ENCODE measurements at regions of chr2 and their contacts with region 1.

Region 1: GRCh38 chr2:28594289-28595108 is 98.6 kb downstream of the PLB1 start:
- DNase-seq: peak; percentile 72 to 93 (median 86)
- ATAC-seq: peak; percentile 79
- H3K4me3 ChIP-seq: peak overlapping the region in 1 of 2 experiments; percentile 0
- H3K4me3 Mint-ChIP-seq: peak overlapping the region; percentile 46
- H3K27ac ChIP-seq: peak overlapping the region in 1 of 2 experiments; percentile 44
- H3K27ac Mint-ChIP-seq: peak overlapping the region; percentile 81
- H3K4me1 ChIP-seq: peaks cover 14% of the 10 kb centered on the region
- H3K4me1 Mint-ChIP-seq: peaks cover 17% of the 10 kb centered on the region
- H3K27me3 ChIP-seq: no peaks in the 10 kb centered on the region
- H3K27me3 Mint-ChIP-seq: peaks cover 7% of the 10 kb centered on the region
- CTCF ChIP-seq: peak; percentile 84

Region 2: DNA sequence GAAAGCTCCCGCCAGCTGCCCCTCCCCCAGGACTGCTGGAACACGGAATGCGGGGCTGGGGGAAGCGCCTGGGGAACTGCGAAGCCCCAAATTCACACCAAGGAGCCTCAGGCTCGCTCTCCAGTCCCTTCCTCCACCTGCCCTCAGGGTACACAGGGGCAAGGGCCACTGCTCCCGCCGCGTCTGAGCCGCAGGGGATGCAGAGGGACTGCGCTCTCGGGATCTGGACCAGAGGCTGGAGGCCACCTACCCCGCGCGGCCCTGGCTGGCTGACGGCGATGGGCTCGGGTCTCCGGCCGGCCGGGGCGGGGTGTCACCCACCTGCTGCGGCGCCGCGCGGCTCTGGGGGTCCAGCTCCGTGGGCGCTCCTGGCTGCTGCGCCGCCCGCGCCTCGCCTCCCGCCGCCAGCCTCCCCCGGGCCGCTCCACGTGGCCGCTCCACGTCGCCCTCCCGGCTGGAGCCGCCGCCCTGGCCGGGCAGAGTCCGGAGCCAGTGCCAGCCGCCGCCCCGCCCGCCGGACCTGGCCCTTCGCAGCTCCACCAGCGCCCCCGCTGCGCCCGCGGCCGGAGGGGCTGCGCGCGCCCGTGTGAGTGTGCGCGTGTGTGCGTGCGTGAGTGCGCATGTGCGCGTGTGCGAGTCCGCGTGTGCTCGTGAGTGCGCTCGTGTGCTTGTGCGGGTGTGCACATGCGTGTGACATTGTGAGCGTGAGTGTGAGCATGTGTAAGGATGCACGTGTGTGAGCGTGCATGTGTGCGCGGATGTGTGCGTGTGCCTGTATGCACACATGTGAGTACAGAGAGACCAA is 1475.8 kb before region 1 on chr2 and contains the start of gene CGREF1:
- CTCF ChIA-PET with region 1: no interaction called
- POLR2A ChIA-PET with region 1: no interaction called
- intact Hi-C with region 1: no loop called
- DNase-seq: peak in 2 of 9 experiments; percentile 30 to 35
- ATAC-seq: no peak
- H3K4me3 ChIP-seq: peak within 1 kb of the TSS; percentile 18 to 60
- H3K4me3 Mint-ChIP-seq: peak within 1 kb of the TSS; percentile 84
- H3K27ac ChIP-seq: no peak within 1 kb of the TSS
- H3K27ac Mint-ChIP-seq: no peak within 1 kb of the TSS
- H3K4me1 ChIP-seq: peaks cover 13% of the 10 kb centered on the region
- H3K4me1 Mint-ChIP-seq: peaks cover 19% of the 10 kb centered on the region
- H3K27me3 ChIP-seq: peaks cover 4 to 12% of the 10 kb centered on the region in 2 experiments
- H3K27me3 Mint-ChIP-seq: peaks cover 23% of the 10 kb centered on the region
- CTCF ChIP-seq: no peak
- total RNA-seq, gene CGREF1: not detected

Region 3: GRCh38 chr2:28613633-28614486 is 19.4 kb after region 1 on chr2:
- CTCF ChIA-PET with region 1: interaction called, 43 read pairs
- POLR2A ChIA-PET with region 1: interaction called, 3 read pairs
- intact Hi-C with region 1: loop called in 1 of 2 experiments (anchors 2 kb)
- DNase-seq: peak in 2 of 9 experiments; percentile 30 to 40
- ATAC-seq: peak; percentile 29
- H3K4me3 ChIP-seq: no peak overlapping the region
- H3K4me3 Mint-ChIP-seq: no peak overlapping the region
- H3K27ac ChIP-seq: peak overlapping the region; percentile 11 to 37
- H3K27ac Mint-ChIP-seq: no peak overlapping the region
- H3K4me1 ChIP-seq: peaks cover 60% of the 10 kb centered on the region
- H3K4me1 Mint-ChIP-seq: peaks cover 33% of the 10 kb centered on the region
- H3K27me3 ChIP-seq: no peaks in the 10 kb centered on the region
- H3K27me3 Mint-ChIP-seq: no peaks in the 10 kb centered on the region
- CTCF ChIP-seq: no peak

Region 4: DNA sequence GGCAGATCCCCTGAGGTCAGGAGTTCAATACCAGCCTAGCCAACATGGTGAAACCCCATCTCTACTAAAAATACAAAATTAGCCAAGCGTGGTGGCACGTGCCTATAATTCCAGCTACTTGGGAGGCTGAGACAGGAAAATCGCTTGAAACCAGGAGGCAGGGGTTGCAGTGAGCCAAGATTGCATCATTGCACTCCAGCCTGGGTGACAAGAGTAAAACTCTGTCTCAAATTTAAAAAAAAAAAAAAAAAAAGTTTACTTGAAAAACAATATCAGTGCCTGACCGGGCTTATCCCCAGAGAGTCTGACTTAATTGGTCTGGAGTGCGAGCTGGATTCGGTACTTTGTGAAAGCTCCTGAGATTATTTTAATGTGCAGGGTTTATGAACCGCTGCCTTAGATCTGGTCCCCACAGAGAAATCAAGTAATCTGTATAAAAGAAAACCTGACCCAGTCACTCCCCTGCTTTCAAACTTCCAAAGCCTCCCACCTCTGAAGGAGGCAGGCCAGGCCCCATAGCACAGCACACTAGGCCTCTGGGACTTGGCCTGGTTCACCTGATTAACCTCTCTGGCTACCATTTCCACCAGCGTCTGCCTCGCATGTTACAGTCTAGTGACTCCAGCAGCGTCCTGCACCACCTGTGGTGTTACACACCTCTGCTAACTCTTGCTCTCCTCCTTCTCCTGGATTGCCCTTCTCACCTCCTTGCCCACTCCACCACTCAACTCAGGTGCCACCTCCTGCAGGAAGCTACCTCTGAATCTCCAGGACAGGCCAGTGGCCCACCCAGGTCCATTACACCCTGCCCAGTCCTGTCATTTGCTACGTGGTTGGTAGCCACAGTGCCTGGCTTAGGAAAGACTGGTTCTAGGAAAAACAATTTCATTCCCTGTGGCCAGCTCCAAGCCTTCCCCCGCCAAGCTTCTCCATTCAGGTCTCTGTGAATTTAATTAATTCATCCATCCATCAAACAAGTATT is 42.9 kb after region 1 on chr2:
- CTCF ChIA-PET with region 1: interaction called, 10 read pairs
- POLR2A ChIA-PET with region 1: no interaction called
- intact Hi-C with region 1: no loop called
- DNase-seq: no peak
- ATAC-seq: no peak
- H3K4me3 ChIP-seq: no peak overlapping the region
- H3K4me3 Mint-ChIP-seq: no peak overlapping the region
- H3K27ac ChIP-seq: no peak overlapping the region
- H3K27ac Mint-ChIP-seq: no peak overlapping the region
- H3K4me1 ChIP-seq: no peaks in the 10 kb centered on the region
- H3K4me1 Mint-ChIP-seq: peaks cover 6% of the 10 kb centered on the region
- H3K27me3 ChIP-seq: no peaks in the 10 kb centered on the region
- H3K27me3 Mint-ChIP-seq: no peaks in the 10 kb centered on the region
- CTCF ChIP-seq: no peak

Region 5: GRCh38 chr2:28751252-28751955 is 156.9 kb after region 1 on chr2 and contains the start of gene PPP1CB:
- CTCF ChIA-PET with region 1: interaction called, 168 read pairs
- POLR2A ChIA-PET with region 1: interaction called, 22 read pairs
- intact Hi-C with region 1: loop called (anchors 1 kb)
- DNase-seq: peak; percentile 93 to 100 (median 95)
- ATAC-seq: peak; percentile 85
- H3K4me3 ChIP-seq: peak within 1 kb of the TSS; percentile 63 to 88
- H3K4me3 Mint-ChIP-seq: peak within 1 kb of the TSS; percentile 93
- H3K27ac ChIP-seq: peak within 1 kb of the TSS; percentile 86 to 97
- H3K27ac Mint-ChIP-seq: peak within 1 kb of the TSS; percentile 96
- H3K4me1 ChIP-seq: peaks cover 46% of the 10 kb centered on the region
- H3K4me1 Mint-ChIP-seq: peaks cover 65% of the 10 kb centered on the region
- H3K27me3 ChIP-seq: no peaks in the 10 kb centered on the region
- H3K27me3 Mint-ChIP-seq: no peaks in the 10 kb centered on the region
- CTCF ChIP-seq: no peak
- total RNA-seq, gene PPP1CB: 331 to 334 TPM

Region 6: GRCh38 chr2:28776471-28776870 is 182.0 kb after region 1 on chr2:
- CTCF ChIA-PET with region 1: interaction called, 14 read pairs
- POLR2A ChIA-PET with region 1: no interaction called
- intact Hi-C with region 1: no loop called
- DNase-seq: no peak
- ATAC-seq: no peak
- H3K4me3 ChIP-seq: no peak overlapping the region
- H3K4me3 Mint-ChIP-seq: no peak overlapping the region
- H3K27ac ChIP-seq: no peak overlapping the region
- H3K27ac Mint-ChIP-seq: no peak overlapping the region
- H3K4me1 ChIP-seq: peaks cover 10% of the 10 kb centered on the region
- H3K4me1 Mint-ChIP-seq: peaks cover 53% of the 10 kb centered on the region
- H3K27me3 ChIP-seq: no peaks in the 10 kb centered on the region
- H3K27me3 Mint-ChIP-seq: no peaks in the 10 kb centered on the region
- CTCF ChIP-seq: no peak

Measured in CD8-positive, alpha-beta T cell (primary cell).